ENCODE measurements at regions of chr20 and their contacts with region 1.

Region 1: GRCh38 chr20:20052074-20052970 is at the starts of genes CFAP61 and CRNKL1:
- DNase-seq: peak; percentile 98
- ATAC-seq: peak; percentile 98
- total RNA-seq, gene CFAP61: 27.4 TPM
- total RNA-seq, gene CRNKL1: 16.5 TPM

Region 2: GRCh38 chr20:19974626-19975435 is 77.5 kb before region 1 on chr20:
- intact Hi-C with region 1: no loop called
- DNase-seq: peak; percentile 91
- ATAC-seq: peak; percentile 82

Region 3: DNA sequence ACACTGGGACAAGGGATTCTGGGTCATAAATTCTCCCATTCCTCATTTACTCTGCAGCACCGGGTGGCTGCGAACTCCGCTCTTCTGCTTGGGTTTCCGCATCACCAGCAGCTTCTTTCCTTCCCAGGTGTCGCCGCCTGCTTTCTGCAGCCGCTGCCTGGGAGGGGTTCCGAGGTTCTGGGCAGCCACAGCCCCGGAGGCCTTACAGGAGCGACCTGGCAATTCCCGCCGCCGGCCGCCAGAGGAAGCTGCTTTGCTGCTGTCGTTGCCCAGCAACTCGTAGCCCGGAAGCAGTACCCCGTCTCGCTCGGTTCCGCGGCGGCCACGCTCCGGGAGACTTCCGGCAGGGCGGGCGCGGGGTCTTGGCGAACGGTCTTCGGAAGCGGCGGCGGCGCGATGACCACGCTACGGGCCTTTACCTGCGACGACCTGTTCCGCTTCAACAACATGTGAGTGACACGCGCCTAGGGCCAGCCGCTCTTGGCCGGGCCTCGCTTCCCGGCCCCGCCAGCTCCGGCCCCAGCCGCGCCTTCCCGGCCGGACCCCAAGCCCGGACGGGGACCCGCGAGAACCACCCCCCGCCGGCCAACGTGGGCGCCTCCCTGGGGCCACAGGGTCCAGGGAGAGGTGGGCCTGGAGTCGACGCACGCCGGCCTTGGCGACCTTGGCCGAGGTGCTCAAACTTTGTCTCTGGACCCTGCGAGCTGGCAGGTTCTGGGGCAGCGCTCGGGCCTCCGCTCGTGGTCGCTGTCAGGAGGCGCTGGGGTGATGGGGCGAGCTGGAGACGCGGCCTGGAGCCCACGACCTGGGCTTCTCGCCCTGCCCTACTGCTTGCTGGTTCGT is 35.1 kb before region 1 on chr20 and contains the start of gene NAA20:
- intact Hi-C with region 1: loop called (anchors 5 kb)
- DNase-seq: peak; percentile 95
- ATAC-seq: peak; percentile 97
- total RNA-seq, gene NAA20: 58.4 TPM

Region 4: GRCh38 chr20:20167698-20168097 is 115.4 kb after region 1 on chr20:
- intact Hi-C with region 1: no loop called
- DNase-seq: no peak
- ATAC-seq: peak; percentile 62

Region 5: DNA sequence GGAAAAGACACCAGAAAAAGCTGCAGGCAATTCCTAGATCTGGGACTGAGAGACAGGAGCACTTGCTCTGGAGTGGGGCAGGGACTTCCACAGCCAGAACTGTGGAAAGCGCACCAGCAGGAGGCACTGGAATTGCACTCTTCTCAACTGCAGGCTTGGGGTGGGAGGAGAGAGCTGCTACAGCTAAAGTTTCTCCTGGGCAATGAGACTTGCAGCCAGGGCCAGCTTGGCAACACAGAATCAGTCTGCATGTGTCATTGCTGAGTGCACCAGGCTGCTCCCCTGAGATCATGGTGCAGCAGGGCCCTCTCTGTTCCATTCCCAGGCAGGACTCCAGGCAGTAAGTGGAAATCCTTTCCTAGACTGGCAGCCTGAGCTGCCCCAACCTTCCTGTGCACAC is 461.4 kb after region 1 on chr20:
- intact Hi-C with region 1: no loop called
- DNase-seq: no peak
- ATAC-seq: no peak